Spleen (tissue), 13 donors: ENCODE measurements at regions of chr6 and their contacts with region 1.

Region 1: DNA sequence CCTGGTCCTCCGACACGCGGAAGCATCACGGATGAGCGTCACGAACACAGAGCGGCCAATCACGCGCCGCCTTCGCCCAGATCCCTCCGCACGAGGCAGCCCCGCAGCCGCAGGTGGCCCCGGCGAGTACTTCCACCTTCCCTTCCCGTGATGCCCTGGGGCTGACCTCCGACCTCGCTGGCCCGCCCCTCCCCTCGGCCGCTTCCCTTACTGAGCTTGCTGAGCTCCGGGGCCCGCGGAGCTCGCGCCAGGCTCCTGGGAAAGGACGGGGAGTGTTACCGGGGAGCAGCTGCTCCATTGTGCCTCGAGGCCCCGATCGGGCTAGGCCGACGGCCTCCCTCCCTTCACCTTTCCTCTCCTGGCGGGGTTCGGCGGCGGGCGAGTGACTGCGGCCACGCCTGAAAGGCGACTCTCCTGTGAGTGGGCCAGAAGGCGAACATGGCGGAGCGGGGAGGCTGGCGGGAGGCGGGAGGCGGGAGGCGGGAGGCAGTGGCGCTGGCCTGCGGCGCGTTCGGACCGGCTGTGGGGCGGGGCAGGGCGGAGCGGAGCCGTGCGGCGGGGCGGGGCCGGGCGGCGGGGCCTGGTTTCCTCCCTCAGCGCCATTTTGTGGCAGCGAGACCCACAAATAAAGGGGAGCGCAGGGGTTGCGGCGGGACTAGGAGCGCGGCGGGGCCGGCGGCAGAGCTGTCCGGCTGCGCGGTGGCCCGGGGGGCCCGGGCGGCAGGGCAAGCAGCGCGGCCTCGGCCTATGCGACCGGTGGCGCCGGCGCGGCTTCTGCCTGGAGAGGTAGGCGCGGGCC is at the start of gene WTAP:
- DNase-seq: peak; percentile 100
- H3K4me3 ChIP-seq: peak within 1 kb of the TSS; percentile 60 to 94 (median 76)
- H3K27ac ChIP-seq: peak within 1 kb of the TSS; percentile 93 to 100 (median 100)
- H3K4me1 ChIP-seq: peaks cover 33 to 78% (median 54%) of the 10 kb centered on the region in 6 donors
- H3K27me3 ChIP-seq: no peaks in the 10 kb centered on the region
- CTCF ChIP-seq: peak in 5 of 11 experiments; percentile 5 to 30 (median 19)
- POLR2A ChIP-seq: peak; percentile 74 to 79 (median 74)
- total RNA-seq, gene WTAP: 97.9 to 121 (median 115) TPM

Region 2: GRCh38 chr6:159693128-159693893 is 33.8 kb before region 1 on chr6 and contains the start of gene SOD2:
- intact Hi-C with region 1: loop called (anchors 5 kb)
- DNase-seq: peak; percentile 97
- H3K4me3 ChIP-seq: peak within 1 kb of the TSS; percentile 88 to 96 (median 94)
- H3K27ac ChIP-seq: peak within 1 kb of the TSS; percentile 92 to 98 (median 97)
- H3K4me1 ChIP-seq: peaks cover 35 to 66% (median 55%) of the 10 kb centered on the region in 6 donors
- H3K27me3 ChIP-seq: no peaks in the 10 kb centered on the region
- CTCF ChIP-seq: peak in 3 of 11 experiments; percentile 13 to 30 (median 14)
- POLR2A ChIP-seq: peak; percentile 39 to 87 (median 68)
- total RNA-seq, gene SOD2: 163 to 463 (median 267) TPM

Region 3: DNA sequence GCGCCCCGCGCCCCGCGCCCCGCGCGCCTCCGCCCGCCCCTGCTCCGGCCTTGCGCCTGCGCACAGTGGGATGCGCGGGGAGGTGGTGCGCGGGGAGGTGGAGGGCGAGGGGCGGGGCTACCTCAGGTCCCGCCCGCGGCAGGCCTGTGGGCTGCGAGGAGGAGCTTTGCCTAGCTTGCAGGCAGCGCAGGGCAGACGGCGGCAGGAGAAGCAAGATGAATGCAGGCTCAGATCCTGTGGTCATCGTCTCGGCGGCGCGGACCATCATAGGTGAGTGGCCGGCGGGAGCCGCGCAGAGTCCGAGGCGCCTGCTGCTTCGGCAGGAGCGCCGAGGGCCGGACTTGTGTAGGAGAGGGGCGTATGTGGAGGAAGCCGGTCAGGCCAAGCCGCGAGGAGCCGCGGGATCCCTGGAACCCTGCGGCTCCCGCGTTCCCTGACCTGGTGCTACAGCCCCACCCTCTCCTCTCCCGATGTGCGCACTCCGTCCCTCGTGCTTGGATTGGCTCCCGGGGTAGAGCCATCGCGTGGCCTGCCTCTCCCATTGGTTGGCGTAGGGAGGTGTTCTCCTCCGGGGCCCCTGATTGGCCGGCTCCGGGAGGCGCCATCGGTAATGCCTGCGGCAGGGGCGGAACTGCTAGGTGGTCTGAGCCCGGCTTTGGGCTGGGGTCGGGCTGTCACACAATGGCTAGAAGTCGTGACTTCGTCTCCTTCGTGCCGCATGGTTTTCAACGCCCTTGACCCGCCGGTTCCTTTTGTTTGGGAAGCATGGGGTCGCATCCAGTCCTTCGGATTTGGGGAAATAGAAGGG is 35.0 kb after region 1 on chr6 and contains the start of gene ACAT2:
- intact Hi-C with region 1: loop called (anchors 5 kb)
- DNase-seq: peak; percentile 98
- H3K4me3 ChIP-seq: peak within 1 kb of the TSS; percentile 72 to 99 (median 94)
- H3K27ac ChIP-seq: peak within 1 kb of the TSS; percentile 96 to 99 (median 98)
- H3K4me1 ChIP-seq: peaks cover 0 to 39% (median 22%) of the 10 kb centered on the region in 6 donors
- H3K27me3 ChIP-seq: no peaks in the 10 kb centered on the region
- CTCF ChIP-seq: peak in 7 of 11 experiments; percentile 27 to 57 (median 40)
- POLR2A ChIP-seq: no peak
- total RNA-seq, gene ACAT2: 6.0 to 17.4 (median 13.6) TPM

Region 4: DNA sequence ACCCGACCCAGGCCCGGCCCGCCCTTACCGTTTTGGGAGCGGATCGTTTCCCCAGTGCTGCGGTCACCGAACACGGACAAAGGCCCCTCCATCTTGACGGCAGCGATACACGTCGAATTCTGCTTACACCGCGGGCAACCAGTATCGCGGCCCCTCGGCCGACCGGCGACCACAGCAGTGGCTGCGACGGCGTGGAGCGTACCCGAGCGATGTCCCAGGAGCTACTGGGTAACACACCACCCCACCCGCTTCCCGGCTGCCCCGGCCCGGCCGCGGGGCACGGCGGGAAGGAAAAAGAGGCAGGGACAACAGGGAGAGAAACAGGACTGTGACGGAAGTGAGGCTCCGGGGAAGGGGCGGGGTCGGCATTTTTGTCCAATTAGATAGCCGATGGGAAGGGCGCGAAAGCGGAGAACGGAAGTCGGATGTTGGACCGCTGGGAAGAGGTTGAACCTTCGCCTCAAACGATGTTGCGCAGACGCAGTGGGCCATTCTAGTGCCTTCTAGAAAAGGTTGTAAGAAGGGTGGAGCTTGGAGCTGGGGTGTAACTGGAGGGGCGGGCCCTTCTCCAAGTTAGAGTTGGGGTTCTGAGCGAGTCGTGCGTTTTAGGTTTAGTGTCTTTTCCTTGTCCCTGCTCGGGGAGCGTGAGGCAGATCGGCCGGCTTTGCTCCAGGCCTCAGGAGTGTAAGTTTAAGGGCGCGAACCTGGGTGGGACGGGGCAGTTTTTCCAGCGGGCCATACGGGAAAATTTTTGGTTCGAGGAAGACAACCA is 62.4 kb after region 1 on chr6 and contains the start of gene TCP1:
- intact Hi-C with region 1: loop called (anchors 10 kb)
- DNase-seq: peak; percentile 99
- H3K4me3 ChIP-seq: peak within 1 kb of the TSS; percentile 88 to 98 (median 93)
- H3K27ac ChIP-seq: peak within 1 kb of the TSS; percentile 85 to 99 (median 97)
- H3K4me1 ChIP-seq: peaks cover 28 to 84% (median 62%) of the 10 kb centered on the region in 6 donors
- H3K27me3 ChIP-seq: no peaks in the 10 kb centered on the region
- CTCF ChIP-seq: peak in 3 of 11 experiments; percentile 5 to 26 (median 17)
- POLR2A ChIP-seq: peak in 2 of 3 donors; percentile 81 to 93
- total RNA-seq, gene TCP1: 94.1 to 136 (median 119) TPM

Region 5: DNA sequence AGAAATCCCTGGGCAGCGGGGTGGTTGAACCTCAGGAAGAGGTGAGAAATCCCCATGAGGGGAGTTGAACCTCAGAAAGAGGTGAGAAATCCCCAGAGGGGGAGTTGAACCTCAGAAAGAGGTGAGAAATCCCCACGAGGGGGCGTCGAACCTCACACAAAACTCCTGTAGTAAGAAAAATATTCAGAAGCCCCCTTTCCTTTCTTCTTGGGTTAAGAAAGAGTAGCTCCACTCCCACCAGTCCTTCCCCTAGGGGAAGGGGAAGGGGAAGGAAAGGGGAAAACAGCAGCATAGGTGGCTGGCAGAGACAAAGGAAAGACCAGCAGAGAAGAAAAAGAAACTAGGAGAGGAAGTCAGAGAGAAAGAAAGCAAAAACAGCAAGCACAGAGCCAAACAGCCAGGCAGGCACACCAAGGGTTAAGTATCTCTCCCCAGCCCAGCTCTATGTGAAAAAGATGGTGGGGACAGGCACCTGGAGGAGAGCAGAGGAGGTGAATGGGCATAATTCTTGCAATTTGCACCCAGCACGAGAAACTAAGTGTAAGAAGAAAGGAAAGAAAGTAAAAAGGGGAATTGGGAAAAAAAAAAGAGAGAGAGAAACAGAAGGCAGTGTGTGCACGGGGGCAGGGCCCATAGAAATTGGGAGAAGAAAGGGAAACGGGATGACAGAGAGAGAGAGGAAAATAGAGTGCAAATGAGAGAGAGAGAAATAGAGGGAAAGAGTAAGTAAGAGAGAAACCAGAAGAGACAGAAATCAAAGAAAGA is 1063.1 kb after region 1 on chr6:
- intact Hi-C with region 1: no loop called
- DNase-seq: no peak
- H3K4me3 ChIP-seq: no peak overlapping the region
- H3K27ac ChIP-seq: no peak overlapping the region
- H3K4me1 ChIP-seq: no peaks in the 10 kb centered on the region
- H3K27me3 ChIP-seq: no peaks in the 10 kb centered on the region
- CTCF ChIP-seq: no peak
- POLR2A ChIP-seq: no peak